AG04450 (cell line): ENCODE measurements at regions of chr20 and their contacts with region 1.

Region 1: GRCh38 chr20:25273541-25274358 is 25.9 kb downstream of the PYGB start:
- DNase-seq: no peak
- H3K4me3 ChIP-seq: no peak overlapping the region
- H3K27ac ChIP-seq: no peak overlapping the region
- H3K27me3 ChIP-seq: no peaks in the 10 kb centered on the region
- CTCF ChIP-seq: no peak

Region 2: GRCh38 chr20:25259788-25260254 is 13.9 kb before region 1 on chr20:
- CTCF ChIA-PET with region 1: no interaction called
- POLR2A ChIA-PET with region 1: no interaction called
- DNase-seq: no peak
- H3K4me3 ChIP-seq: no peak overlapping the region
- H3K27ac ChIP-seq: no peak overlapping the region
- H3K27me3 ChIP-seq: no peaks in the 10 kb centered on the region
- CTCF ChIP-seq: no peak

Region 3: GRCh38 chr20:25294459-25295385 is 21.0 kb after region 1 on chr20:
- CTCF ChIA-PET with region 1: interaction called, 3 read pairs
- POLR2A ChIA-PET with region 1: interaction called, 11 read pairs
- DNase-seq: no peak
- H3K4me3 ChIP-seq: no peak overlapping the region
- H3K27ac ChIP-seq: peak overlapping the region; percentile 39
- H3K27me3 ChIP-seq: no peaks in the 10 kb centered on the region
- CTCF ChIP-seq: peak; percentile 99